ENCODE measurements at regions of chr11 and their contacts with region 1.

Region 1: DNA sequence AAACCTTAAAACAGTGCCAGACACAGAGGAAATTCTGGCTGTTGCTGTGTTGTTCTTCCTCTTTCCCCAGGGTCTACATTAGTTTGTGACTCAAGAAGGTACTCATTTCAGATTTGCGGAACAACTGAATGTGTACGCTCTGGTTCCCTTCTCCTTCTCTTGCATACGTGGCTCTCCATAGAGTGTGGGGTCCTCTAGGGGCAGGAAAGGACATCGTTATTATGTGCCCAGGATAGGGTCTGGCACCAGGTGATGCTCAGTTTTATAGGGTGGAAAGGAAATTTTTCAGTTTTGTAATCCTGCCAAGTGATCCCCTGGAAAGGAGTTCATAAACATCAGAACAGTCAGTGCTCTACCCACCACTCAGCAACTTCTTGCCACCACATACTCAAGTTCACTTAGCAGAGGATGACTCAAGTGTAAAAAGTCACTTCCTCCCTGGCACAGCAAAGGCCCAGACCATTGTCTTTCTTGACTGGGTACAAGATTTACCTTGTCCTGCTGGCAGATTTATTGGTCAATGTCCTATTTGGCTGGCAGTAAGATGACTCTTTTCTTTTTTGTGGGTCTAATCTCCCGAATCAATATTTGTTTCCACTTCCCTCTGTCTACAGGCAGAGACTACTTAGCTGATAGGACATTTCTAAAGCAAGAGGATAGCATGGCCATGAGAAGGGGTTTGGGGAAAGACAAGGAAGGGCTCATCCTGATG is 246.0 kb upstream of the TENM4 start:
- DNase-seq: no peak

Region 2: DNA sequence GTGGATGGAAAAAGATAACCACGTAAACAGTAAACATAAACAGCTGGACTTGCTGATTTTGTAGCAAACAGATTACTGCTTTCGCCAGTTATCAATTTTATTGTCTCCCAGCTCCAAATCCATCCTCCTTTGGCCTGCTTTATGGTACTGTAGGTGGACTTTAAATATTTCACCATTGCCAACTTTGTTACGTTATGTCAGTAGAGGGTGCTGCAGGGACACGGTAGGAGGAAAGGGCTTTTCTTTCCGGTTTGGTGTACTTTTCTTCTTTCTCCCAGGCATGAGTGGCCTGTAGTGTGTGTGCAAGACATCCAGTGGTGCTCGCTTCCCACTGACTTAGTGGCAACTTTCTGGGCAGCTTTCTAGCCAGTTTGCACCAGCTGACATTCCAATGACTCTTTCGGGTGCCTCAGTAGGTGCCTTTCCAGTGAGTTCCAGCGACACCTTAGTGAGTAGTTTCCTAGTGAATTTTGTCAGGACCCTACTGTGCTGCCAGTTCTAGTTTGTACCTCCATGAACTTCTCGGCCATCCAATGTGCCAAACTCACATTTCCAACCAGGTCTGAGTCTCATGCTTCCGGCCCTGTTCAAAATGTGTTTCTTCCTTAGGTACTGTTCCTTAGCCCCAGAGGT is 21.6 kb after region 1 on chr11:
- intact Hi-C with region 1: no loop called
- DNase-seq: no peak

Region 3: GRCh38 chr11:79739591-79739990 is 52.7 kb after region 1 on chr11:
- intact Hi-C with region 1: loop called in 1 of 2 experiments (anchors 10 kb)
- DNase-seq: no peak

Region 4: GRCh38 chr11:79880271-79880670 is 193.4 kb after region 1 on chr11:
- intact Hi-C with region 1: no loop called
- DNase-seq: no peak

Measured in posterior vena cava (tissue), 2 donors.